Activated CD8-positive, alpha-beta T cell treated with anti-CD3 and anti-CD28 coated beads for 36 hours (primary cell): ENCODE measurements at regions of chr11 and their contacts with region 1.

Region 1: DNA sequence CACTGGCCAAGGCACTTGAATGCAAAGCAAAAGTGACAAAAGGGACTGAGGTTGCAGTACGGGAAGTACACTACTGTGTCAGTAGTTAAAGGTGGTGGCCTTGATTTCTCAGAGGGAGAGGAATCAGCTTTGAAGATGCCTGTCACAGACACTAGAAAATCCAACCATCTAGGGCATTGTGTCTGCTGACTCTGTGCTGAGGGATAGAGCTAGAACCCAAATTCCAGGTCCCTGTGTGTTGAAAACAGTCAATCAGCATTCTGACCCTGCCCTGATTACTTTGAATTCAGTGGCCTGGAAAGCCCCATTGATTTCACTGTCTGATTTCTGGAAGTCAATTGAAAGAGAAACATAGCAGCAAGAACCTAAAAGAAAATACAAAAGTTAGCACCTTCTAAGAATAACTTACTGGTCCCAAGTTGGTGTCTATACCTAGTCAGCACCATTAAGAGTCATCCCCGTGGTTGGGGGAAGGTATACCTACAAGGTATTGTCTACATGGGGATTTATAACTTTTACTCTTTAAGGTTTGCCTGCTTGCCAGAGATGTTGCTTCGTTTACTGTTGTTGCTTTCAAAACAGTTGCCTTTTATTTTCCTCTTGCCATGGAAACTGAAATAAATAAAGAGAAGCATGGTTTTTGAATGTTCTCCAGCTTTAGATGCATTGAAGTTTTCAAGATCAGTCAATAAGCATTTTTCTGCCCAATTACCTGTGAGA is 97.3 kb downstream of the PDHX start:
- DNase-seq: peak; percentile 48
- ATAC-seq: peak; percentile 70
- H3K4me3 Mint-ChIP-seq: peak overlapping the region; percentile 13
- H3K27ac Mint-ChIP-seq: peak overlapping the region; percentile 76
- H3K4me1 Mint-ChIP-seq: peaks cover 47% of the 10 kb centered on the region
- H3K27me3 Mint-ChIP-seq: peaks cover 2% of the 10 kb centered on the region
- CTCF ChIP-seq: no peak

Region 2: DNA sequence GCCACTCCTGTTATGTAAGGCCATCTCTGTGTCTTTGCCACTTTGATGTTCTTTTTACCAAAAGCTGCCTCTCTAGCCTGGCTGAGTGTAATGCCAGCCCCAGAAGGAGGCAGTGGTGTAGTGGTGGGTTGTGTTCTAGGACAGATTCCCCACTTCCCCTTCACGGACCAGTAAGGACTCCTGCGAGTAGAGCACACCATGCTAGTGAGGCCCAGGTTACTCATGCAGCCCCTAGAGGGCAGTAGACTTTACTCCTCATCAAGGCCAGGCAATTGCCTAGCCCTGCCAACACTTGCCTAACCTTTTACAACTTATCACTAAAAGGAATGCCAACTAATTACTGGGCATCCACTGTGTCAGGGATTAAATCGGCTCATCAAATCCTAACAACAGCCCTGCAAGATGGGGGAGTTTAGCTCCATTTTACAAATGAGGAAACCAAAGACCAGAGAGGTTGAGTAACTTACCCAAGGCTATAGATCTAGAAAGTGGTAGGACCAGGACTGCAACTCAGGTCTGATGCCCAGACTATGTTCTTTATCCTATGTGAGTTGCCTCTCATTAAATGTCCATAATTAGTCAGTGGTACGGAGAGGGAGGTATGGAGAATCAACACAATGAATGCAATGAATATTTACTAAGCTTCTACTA is 172.8 kb before region 1 on chr11:
- CTCF ChIA-PET with region 1: no interaction called
- POLR2A ChIA-PET with region 1: no interaction called
- intact Hi-C with region 1: no loop called
- DNase-seq: peak; percentile 27
- ATAC-seq: peak; percentile 60
- H3K4me3 Mint-ChIP-seq: no peak overlapping the region
- H3K27ac Mint-ChIP-seq: no peak overlapping the region
- H3K4me1 Mint-ChIP-seq: no peaks in the 10 kb centered on the region
- H3K27me3 Mint-ChIP-seq: peaks cover 16% of the 10 kb centered on the region
- CTCF ChIP-seq: peak; percentile 50

Region 3: GRCh38 chr11:35029979-35030378 is 16.3 kb after region 1 on chr11:
- CTCF ChIA-PET with region 1: interaction called, 4 read pairs
- POLR2A ChIA-PET with region 1: interaction called, 10 read pairs
- intact Hi-C with region 1: no loop called
- DNase-seq: no peak
- ATAC-seq: peak; percentile 45
- H3K4me3 Mint-ChIP-seq: no peak overlapping the region
- H3K27ac Mint-ChIP-seq: peak overlapping the region; percentile 90
- H3K4me1 Mint-ChIP-seq: peaks cover 34% of the 10 kb centered on the region
- H3K27me3 Mint-ChIP-seq: no peaks in the 10 kb centered on the region
- CTCF ChIP-seq: no peak

Region 4: GRCh38 chr11:35040221-35040942 is 26.7 kb after region 1 on chr11:
- CTCF ChIA-PET with region 1: interaction called, 3 read pairs
- POLR2A ChIA-PET with region 1: interaction called, 6 read pairs
- intact Hi-C with region 1: loop called (anchors 2 kb)
- DNase-seq: peak; percentile 84
- ATAC-seq: peak; percentile 83
- H3K4me3 Mint-ChIP-seq: peak overlapping the region; percentile 63
- H3K27ac Mint-ChIP-seq: peak overlapping the region; percentile 91
- H3K4me1 Mint-ChIP-seq: peaks cover 71% of the 10 kb centered on the region
- H3K27me3 Mint-ChIP-seq: no peaks in the 10 kb centered on the region
- CTCF ChIP-seq: no peak

Region 5: DNA sequence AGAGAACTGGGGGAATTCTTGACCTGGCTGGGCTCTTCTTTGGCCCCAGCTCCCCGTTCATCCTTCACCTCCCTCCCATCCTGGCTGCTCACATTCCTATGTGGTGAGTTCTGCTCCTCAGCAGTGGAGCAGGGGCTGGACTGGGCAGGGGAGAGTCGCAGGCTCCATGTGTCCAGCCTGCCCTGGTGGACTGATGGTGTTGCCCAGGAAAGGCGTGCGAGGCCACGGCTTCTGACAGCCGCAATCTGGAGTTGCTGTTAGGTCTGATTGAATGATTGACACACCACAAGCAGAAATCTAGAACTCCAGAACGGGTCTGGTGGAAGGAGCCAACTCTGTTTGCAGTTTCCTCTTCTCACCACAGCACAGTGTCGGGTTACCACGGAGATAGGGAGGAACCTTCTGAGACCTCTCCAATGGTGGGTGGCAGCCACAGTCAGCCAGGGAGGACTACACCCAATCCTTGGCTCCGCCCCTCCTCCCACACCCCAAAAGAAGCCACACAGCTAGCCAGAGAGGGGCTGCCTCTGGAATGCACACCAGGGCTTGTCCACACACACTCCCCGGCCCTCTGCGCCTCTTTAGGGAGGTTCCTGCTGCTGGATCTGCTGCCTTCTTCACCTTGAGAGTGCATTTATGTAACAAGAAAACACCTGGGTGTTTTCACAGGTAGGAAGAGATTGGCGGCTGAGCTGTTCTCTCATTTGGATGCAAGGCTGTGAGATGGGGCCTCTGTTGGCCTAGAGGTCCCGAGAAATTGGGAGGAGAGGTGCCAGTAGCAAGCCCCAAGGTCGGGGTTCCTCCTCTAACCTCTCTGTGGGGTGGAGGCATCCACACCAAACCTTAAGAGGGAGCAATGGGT is 68.9 kb after region 1 on chr11:
- CTCF ChIA-PET with region 1: no interaction called
- POLR2A ChIA-PET with region 1: interaction called, 7 read pairs
- intact Hi-C with region 1: loop called (anchors 2 kb)
- DNase-seq: peak; percentile 93
- ATAC-seq: peak; percentile 80
- H3K4me3 Mint-ChIP-seq: peak overlapping the region; percentile 58
- H3K27ac Mint-ChIP-seq: peak overlapping the region; percentile 89
- H3K4me1 Mint-ChIP-seq: peaks cover 80% of the 10 kb centered on the region
- H3K27me3 Mint-ChIP-seq: no peaks in the 10 kb centered on the region
- CTCF ChIP-seq: no peak